ENCODE measurements at regions of chr14 and their contacts with region 1.

Region 1: DNA sequence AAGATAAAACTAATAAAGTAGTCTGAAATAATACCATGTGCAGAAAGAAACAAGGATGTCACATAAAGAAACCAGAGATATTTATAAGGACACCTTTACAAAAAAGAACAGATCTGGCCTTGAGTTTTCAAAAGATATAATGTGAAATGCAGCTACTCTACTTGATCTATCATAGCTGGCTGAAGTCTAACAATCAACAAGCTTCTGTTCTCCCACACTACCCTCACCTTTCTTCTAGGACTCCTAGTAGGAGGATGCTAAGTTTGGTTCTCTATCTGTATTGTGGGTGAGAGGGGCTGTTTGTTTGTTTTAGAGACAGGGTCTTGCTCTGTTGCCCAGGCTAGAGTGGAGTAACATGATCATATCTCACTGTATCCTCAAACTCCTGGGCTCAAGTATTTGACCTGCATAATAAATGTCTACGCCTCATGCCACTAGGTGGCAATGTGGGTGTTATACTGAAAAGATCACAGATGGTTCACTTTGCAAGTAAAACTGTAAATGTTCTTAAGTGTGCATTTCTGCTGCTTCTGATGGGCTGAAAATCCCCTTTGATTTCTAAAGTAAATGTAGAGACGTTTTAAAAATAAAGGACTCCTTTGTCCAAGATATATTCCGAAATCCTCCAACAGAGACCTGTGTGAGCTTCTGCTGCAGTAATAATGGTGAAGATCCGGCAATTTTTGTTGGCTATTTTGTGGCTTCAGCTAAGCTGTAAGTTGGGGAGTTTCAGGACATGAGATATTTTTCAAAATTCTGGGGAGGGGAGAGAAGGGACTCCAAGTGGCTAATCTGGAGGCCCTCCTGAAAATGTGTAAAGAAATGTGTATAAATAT is 269.3 kb downstream of the DAD1 start:
- DNase-seq: peak in 6 of 14 experiments; percentile 6 to 40 (median 22)
- ATAC-seq: peak; percentile 43
- H3K4me3 ChIP-seq: peak overlapping the region; percentile 22
- H3K4me3 Mint-ChIP-seq: peak overlapping the region; percentile 81
- H3K27ac ChIP-seq: no peak overlapping the region
- H3K27ac Mint-ChIP-seq: peak overlapping the region; percentile 77
- H3K4me1 ChIP-seq: no peaks in the 10 kb centered on the region
- H3K4me1 Mint-ChIP-seq: no peaks in the 10 kb centered on the region
- H3K27me3 ChIP-seq: no peaks in the 10 kb centered on the region
- H3K27me3 Mint-ChIP-seq: no peaks in the 10 kb centered on the region
- CTCF ChIP-seq: peak; percentile 18

Region 2: GRCh38 chr14:22276913-22277816 is 42.6 kb before region 1 on chr14:
- CTCF ChIA-PET with region 1: no interaction called
- POLR2A ChIA-PET with region 1: no interaction called
- intact Hi-C with region 1: no loop called
- DNase-seq: peak in 1 of 14 experiments; percentile 12
- ATAC-seq: no peak
- H3K4me3 ChIP-seq: no peak overlapping the region
- H3K4me3 Mint-ChIP-seq: peak overlapping the region; percentile 25
- H3K27ac ChIP-seq: no peak overlapping the region
- H3K27ac Mint-ChIP-seq: no peak overlapping the region
- H3K4me1 ChIP-seq: no peaks in the 10 kb centered on the region
- H3K4me1 Mint-ChIP-seq: peaks cover 7% of the 10 kb centered on the region
- H3K27me3 ChIP-seq: no peaks in the 10 kb centered on the region
- H3K27me3 Mint-ChIP-seq: no peaks in the 10 kb centered on the region
- CTCF ChIP-seq: peak; percentile 15

Region 3: DNA sequence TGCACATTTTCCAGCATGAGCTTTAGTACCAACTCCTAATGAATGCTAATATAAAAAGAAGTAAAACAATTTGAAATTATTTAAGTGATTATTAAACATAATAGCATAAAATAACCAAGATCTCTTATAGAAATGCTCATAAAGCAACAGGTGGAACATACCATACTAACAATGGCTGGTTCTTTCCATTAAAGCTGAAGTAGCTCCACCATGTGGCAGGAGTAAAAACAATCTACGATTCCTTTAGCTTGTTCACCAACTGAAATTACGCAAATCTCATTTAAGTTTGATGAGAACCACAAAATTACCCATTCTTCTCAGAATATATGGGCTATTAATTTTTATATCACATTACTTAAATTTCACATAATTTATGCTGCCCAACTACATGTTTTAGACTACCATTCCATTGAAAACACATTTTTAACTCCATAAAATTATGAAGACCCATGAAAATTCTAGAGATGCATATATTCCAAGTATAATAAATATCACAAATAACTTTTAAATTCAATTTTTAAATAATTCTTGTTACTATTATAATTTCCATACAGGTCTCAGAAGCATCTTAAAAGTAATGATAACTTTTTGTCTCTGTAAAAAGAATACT is 55.7 kb after region 1 on chr14:
- CTCF ChIA-PET with region 1: no interaction called
- POLR2A ChIA-PET with region 1: no interaction called
- intact Hi-C with region 1: loop called (anchors 5 to 10 kb)
- DNase-seq: peak in 2 of 14 experiments; percentile 9 to 13
- ATAC-seq: no peak
- H3K4me3 ChIP-seq: no peak overlapping the region
- H3K4me3 Mint-ChIP-seq: no peak overlapping the region
- H3K27ac ChIP-seq: no peak overlapping the region
- H3K27ac Mint-ChIP-seq: no peak overlapping the region
- H3K4me1 ChIP-seq: no peaks in the 10 kb centered on the region
- H3K4me1 Mint-ChIP-seq: no peaks in the 10 kb centered on the region
- H3K27me3 ChIP-seq: no peaks in the 10 kb centered on the region
- H3K27me3 Mint-ChIP-seq: no peaks in the 10 kb centered on the region
- CTCF ChIP-seq: no peak

Region 4: GRCh38 chr14:22483863-22484593 is 164.3 kb after region 1 on chr14:
- CTCF ChIA-PET with region 1: no interaction called
- POLR2A ChIA-PET with region 1: no interaction called
- intact Hi-C with region 1: loop called in 1 of 2 experiments (anchors 2 kb)
- DNase-seq: no peak
- ATAC-seq: peak; percentile 58
- H3K4me3 ChIP-seq: peak overlapping the region; percentile 55
- H3K4me3 Mint-ChIP-seq: peak overlapping the region; percentile 88
- H3K27ac ChIP-seq: peak overlapping the region in 1 of 2 donors; percentile 41
- H3K27ac Mint-ChIP-seq: peak overlapping the region; percentile 93
- H3K4me1 ChIP-seq: peaks cover 3% of the 10 kb centered on the region
- H3K4me1 Mint-ChIP-seq: peaks cover 15% of the 10 kb centered on the region
- H3K27me3 ChIP-seq: no peaks in the 10 kb centered on the region
- H3K27me3 Mint-ChIP-seq: no peaks in the 10 kb centered on the region
- CTCF ChIP-seq: no peak

Measured in CD4-positive, alpha-beta T cell (primary cell).